ENCODE measurements at regions of chr5 and their contacts with region 1.

Region 1: GRCh38 chr5:147935032-147935431 is 28.7 kb upstream of the C5orf46 start:
- DNase-seq: no peak
- H3K4me3 ChIP-seq: no peak overlapping the region
- H3K27ac ChIP-seq: no peak overlapping the region
- H3K27me3 ChIP-seq: no peaks in the 10 kb centered on the region
- CTCF ChIP-seq: peak; percentile 41

Region 2: GRCh38 chr5:147857302-147858129 is 77.5 kb before region 1 on chr5:
- CTCF ChIA-PET with region 1: interaction called, 78 read pairs
- POLR2A ChIA-PET with region 1: no interaction called
- DNase-seq: peak; percentile 15
- H3K4me3 ChIP-seq: no peak overlapping the region
- H3K27ac ChIP-seq: no peak overlapping the region
- H3K27me3 ChIP-seq: no peaks in the 10 kb centered on the region
- CTCF ChIP-seq: peak; percentile 87

Region 3: GRCh38 chr5:147887024-147887627 is 47.9 kb before region 1 on chr5:
- CTCF ChIA-PET with region 1: interaction called, 24 read pairs
- POLR2A ChIA-PET with region 1: no interaction called
- DNase-seq: no peak
- H3K4me3 ChIP-seq: no peak overlapping the region
- H3K27ac ChIP-seq: no peak overlapping the region
- H3K27me3 ChIP-seq: no peaks in the 10 kb centered on the region
- CTCF ChIP-seq: peak; percentile 43

Region 4: DNA sequence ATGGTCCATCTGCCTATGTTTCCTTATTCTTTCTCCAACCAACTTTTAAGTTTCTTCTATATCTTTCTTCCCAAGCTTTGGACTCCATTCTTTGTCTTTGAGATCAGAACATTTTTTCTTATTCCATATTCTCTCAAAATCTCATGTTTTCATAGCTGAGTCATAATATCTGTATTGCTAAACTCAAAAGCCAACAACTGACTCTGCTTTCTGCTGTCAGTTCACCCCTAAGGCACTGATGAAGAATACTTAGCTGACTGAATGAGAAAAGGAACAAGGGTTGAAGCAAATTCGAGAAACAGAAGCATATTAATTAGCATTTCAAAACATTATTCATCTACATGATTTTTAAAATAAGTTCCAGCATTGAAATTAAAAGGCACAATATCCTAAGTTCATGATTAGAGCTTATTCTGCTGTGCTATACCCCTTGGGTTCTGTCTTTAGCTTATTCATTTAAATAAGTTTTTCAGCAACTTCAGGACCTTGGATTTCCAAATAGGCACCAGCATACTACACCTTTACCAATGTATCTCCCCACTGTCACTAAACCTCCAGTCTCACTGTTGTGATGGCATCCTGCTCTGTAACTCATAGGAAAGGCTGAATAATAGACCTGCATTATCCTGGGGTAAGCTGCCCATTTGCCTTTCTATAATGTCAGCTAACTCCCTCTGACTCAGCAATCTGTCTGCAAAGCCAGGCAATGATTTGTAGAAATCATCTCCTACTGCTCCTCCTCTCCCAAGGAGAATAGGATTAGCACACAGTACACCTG is 21.2 kb after region 1 on chr5:
- CTCF ChIA-PET with region 1: no interaction called
- POLR2A ChIA-PET with region 1: no interaction called
- DNase-seq: no peak
- H3K4me3 ChIP-seq: no peak overlapping the region
- H3K27ac ChIP-seq: no peak overlapping the region
- H3K27me3 ChIP-seq: no peaks in the 10 kb centered on the region
- CTCF ChIP-seq: no peak

Measured in AG04450 (cell line).